Activated T-helper 1 cell treated with anti-CD3 and anti-CD28 coated beads, Interleukin-12 subunit alpha, Interleukin-12 subunit beta, Interleukin-2, Interleukin-4 antibody, amounts not matched to agents 30 ng/mL and 10 ng/mL and 1 ng/mL, durations not matched to agents 14 hours and 24 hours and 36 hours (primary cell): ENCODE measurements at regions of chr16 and their contacts with region 1.

Region 1: GRCh38 chr16:48556913-48557351 is 53.0 kb downstream of the N4BP1 start:
- DNase-seq: peak; percentile 20
- H3K4me3 Mint-ChIP-seq: peak overlapping the region; percentile 62
- H3K27ac Mint-ChIP-seq: peak overlapping the region; percentile 92
- H3K4me1 Mint-ChIP-seq: peaks cover 86% of the 10 kb centered on the region
- H3K27me3 Mint-ChIP-seq: no peaks in the 10 kb centered on the region

Region 2: DNA sequence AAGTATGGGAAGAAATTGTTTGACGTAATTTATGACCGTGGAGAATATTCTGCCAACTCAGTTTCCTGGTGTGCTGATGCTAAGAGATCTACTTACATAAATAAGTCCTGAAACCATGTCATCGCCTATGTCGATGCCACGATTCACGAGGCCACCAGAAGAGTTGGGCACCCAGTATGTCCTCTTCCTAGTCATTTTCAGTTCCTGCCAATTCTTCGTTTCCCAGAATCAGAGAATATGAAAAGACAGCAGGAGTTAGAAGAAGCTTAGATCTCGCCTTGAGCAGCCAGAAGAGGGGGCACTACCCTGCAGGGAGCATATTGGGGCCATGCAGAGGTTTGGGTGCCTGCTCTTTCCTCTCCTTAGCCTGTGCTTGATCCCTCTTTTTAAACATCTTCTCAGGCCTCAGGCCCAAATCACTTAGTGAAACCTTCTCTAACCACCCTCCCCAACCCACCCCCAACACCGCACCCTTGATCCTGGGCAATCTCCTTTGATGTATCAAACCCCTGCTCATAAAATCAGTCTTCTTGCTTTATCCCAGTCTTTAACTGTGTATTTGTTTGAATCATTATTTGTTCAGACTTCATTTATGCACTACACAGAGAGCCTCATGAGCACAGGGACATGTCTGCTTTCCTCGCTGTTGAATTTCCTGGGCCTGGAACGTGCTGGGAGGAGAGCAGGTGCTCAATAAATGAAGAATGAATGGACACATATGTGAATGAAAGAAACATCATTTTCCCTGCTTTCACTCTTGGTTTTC is 325.0 kb before region 1 on chr16:
- intact Hi-C with region 1: loop called (anchors 5 kb)
- DNase-seq: peak; percentile 28
- H3K4me3 Mint-ChIP-seq: no peak overlapping the region
- H3K27ac Mint-ChIP-seq: peak overlapping the region; percentile 55
- H3K4me1 Mint-ChIP-seq: peaks cover 25% of the 10 kb centered on the region
- H3K27me3 Mint-ChIP-seq: peaks cover 14% of the 10 kb centered on the region

Region 3: DNA sequence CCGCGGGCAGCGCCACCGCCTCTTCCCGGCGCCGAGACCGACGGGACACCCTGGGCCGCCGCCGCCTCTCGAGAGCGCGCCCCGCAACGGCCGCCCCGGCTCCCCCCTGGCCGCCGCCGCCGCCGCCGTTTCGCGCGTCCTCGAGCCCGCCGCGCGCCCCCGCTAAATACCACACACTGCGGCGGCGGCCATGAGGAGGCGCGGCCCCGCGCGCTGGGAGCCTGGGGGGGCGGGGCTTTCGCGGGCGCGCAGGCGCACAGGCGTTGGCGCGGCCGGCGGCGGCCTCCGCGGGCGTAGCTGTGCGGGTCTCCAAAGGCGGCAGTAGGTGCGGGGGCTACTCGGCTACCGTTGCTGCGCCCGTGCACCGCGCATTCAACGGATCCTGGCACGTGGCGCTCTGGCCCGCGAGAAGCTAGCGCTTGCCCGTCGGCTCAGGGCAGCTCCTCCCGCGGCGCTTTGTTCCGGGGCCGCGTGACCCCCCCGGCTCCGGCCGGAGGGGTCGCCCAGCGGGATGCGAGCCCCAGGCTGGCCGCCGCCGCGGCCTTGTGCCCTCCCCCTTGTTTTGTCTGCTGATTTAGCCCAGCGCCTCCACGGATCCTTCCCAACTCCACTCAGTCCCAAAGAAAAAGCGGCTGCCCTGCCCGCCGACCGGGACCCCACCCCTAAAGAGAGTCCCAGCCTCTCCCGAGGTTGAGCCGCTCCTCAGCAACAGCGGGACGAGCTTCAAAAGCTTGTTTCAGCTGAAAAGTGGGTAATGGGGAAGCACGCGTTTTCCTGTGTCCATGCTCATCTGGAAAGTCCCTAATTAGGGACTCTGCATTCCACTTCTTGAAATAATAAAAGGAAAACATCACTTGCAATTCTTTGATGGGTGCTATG is 171.4 kb before region 1 on chr16 and contains the start of gene SIAH1:
- intact Hi-C with region 1: loop called (anchors 2 kb)
- DNase-seq: peak; percentile 85
- H3K4me3 Mint-ChIP-seq: peak within 1 kb of the TSS; percentile 97
- H3K27ac Mint-ChIP-seq: peak within 1 kb of the TSS; percentile 95
- H3K4me1 Mint-ChIP-seq: peaks cover 29% of the 10 kb centered on the region
- H3K27me3 Mint-ChIP-seq: peaks cover 3% of the 10 kb centered on the region
- total RNA-seq, gene SIAH1: 15.6 and 16.8 TPM in 2 replicates

Region 4: GRCh38 chr16:48596326-48596725 is 39.4 kb after region 1 on chr16:
- intact Hi-C with region 1: loop called (anchors 1 kb)
- DNase-seq: peak; percentile 54
- H3K4me3 Mint-ChIP-seq: peak overlapping the region; percentile 57
- H3K27ac Mint-ChIP-seq: peak overlapping the region; percentile 90
- H3K4me1 Mint-ChIP-seq: peaks cover 53% of the 10 kb centered on the region
- H3K27me3 Mint-ChIP-seq: no peaks in the 10 kb centered on the region